Ovary (tissue), 10 donors: ENCODE measurements at regions of chr18 and their contacts with region 1.

Region 1: GRCh38 chr18:62209046-62209445 is 22.0 kb downstream of the RELCH start:
- DNase-seq: no peak
- H3K4me3 ChIP-seq: no peak overlapping the region
- H3K27ac ChIP-seq: no peak overlapping the region
- H3K4me1 ChIP-seq: no peaks in the 10 kb centered on the region
- H3K27me3 ChIP-seq: no peaks in the 10 kb centered on the region
- CTCF ChIP-seq: no peak
- EP300 ChIP-seq: no peak
- POLR2A ChIP-seq: no peak

Region 2: DNA sequence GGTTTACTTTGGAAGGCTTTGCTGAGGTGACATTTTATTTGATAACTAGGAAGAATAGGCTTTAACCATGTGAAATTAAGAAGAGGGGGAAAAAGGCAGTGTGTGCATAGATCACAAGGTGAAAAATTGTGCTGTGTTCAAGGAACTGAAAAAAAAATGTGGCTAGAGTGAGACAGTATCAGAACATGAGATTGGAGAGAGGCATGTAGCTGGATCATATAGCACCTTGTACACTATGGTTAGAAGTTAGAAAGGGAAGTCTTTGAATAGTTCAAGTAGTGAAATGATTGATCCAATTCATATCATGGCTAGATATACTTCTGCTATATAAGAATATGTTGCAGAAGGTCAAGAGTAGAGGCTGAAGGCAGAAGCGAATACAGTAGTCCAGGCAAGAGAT is 103.8 kb after region 1 on chr18:
- intact Hi-C with region 1: loop called in 1 of 4 experiments (anchors 5 kb)
- DNase-seq: no peak
- H3K4me3 ChIP-seq: no peak overlapping the region
- H3K27ac ChIP-seq: no peak overlapping the region
- H3K4me1 ChIP-seq: no peaks in the 10 kb centered on the region
- H3K27me3 ChIP-seq: no peaks in the 10 kb centered on the region
- CTCF ChIP-seq: no peak
- EP300 ChIP-seq: no peak
- POLR2A ChIP-seq: no peak